CD4-positive, alpha-beta memory T cell (primary cell): ENCODE measurements at regions of chr20 and their contacts with region 1.

Region 1: DNA sequence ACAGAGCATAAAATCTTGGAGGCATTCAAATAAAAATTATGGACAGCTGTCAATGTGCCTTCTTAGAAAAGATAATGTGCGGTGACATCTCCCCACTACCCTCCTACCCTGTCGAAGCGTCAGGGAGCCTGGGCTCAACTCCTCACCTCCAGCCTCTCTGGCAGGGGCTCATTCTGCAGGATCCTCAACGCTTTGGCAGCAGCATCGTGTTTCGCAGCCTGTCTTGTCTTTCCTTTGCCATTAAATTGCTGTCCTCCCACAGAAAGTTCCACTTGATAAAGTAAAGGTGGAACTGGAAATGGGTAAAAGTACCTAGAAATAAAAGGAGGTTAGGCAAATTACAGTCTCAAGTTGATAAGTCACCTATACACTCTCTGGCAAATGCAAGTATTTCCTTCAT is 36.7 kb downstream of the STAU1 start:
- DNase-seq: no peak
- H3K4me3 ChIP-seq: no peak overlapping the region
- H3K4me3 Mint-ChIP-seq: no peak overlapping the region
- H3K27ac ChIP-seq: no peak overlapping the region
- H3K27ac Mint-ChIP-seq: peak overlapping the region in 2 of 7 donors; percentile 29 to 86
- H3K4me1 ChIP-seq: no peaks in the 10 kb centered on the region
- H3K4me1 Mint-ChIP-seq: peaks cover 8 to 37% (median 13%) of the 10 kb centered on the region in 4 donors
- H3K27me3 ChIP-seq: no peaks in the 10 kb centered on the region
- H3K27me3 Mint-ChIP-seq: no peaks in the 10 kb centered on the region

Region 2: DNA sequence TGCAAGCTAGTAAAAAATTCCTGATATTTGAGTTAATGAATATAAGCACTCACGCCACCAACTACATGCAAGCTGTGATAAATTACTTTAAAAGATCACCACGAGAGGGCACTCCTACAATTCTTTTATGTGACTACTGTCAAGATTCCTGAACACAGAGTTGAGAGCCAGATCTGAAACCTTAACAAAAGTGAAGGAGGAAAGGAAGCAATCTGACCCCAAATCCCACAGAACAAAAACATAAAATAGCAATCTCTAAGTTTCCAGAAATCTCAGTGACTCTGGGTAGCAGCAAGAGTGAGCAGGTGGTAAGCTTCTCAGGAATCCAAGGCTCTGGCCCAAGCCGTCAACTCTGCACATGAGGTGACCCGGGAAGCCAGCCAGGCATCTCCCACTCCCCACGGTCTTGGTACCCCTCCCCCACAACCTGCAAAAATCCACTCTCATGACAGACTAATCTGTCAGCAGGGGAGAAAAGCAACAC is 18.4 kb before region 1 on chr20:
- CTCF ChIA-PET with region 1: interaction called, 11 read pairs
- POLR2A ChIA-PET with region 1: no interaction called
- intact Hi-C with region 1: no loop called
- DNase-seq: peak in 4 of 5 donors; percentile 58 to 61 (median 60)
- H3K4me3 ChIP-seq: no peak overlapping the region
- H3K4me3 Mint-ChIP-seq: no peak overlapping the region
- H3K27ac ChIP-seq: no peak overlapping the region
- H3K27ac Mint-ChIP-seq: peak overlapping the region in 6 of 7 donors; percentile 1 to 71 (median 38)
- H3K4me1 ChIP-seq: no peaks in the 10 kb centered on the region
- H3K4me1 Mint-ChIP-seq: peaks cover 5 to 15% (median 8%) of the 10 kb centered on the region in 4 donors
- H3K27me3 ChIP-seq: no peaks in the 10 kb centered on the region
- H3K27me3 Mint-ChIP-seq: no peaks in the 10 kb centered on the region

Region 3: GRCh38 chr20:49340161-49340966 is 188.9 kb after region 1 on chr20:
- CTCF ChIA-PET with region 1: no interaction called
- POLR2A ChIA-PET with region 1: no interaction called
- intact Hi-C with region 1: no loop called
- DNase-seq: no peak
- H3K4me3 ChIP-seq: no peak overlapping the region
- H3K4me3 Mint-ChIP-seq: no peak overlapping the region
- H3K27ac ChIP-seq: no peak overlapping the region
- H3K27ac Mint-ChIP-seq: peak overlapping the region in 1 of 7 donors; percentile 52
- H3K4me1 ChIP-seq: no peaks in the 10 kb centered on the region
- H3K4me1 Mint-ChIP-seq: no peaks in the 10 kb centered on the region
- H3K27me3 ChIP-seq: no peaks in the 10 kb centered on the region
- H3K27me3 Mint-ChIP-seq: peaks cover 6 to 8% of the 10 kb centered on the region in 2 donors